Activated B cell treated with CpG ODN at 0.5 μM for 24 hours (primary cell): ENCODE measurements at regions of chr7 and their contacts with region 1.

Region 1: DNA sequence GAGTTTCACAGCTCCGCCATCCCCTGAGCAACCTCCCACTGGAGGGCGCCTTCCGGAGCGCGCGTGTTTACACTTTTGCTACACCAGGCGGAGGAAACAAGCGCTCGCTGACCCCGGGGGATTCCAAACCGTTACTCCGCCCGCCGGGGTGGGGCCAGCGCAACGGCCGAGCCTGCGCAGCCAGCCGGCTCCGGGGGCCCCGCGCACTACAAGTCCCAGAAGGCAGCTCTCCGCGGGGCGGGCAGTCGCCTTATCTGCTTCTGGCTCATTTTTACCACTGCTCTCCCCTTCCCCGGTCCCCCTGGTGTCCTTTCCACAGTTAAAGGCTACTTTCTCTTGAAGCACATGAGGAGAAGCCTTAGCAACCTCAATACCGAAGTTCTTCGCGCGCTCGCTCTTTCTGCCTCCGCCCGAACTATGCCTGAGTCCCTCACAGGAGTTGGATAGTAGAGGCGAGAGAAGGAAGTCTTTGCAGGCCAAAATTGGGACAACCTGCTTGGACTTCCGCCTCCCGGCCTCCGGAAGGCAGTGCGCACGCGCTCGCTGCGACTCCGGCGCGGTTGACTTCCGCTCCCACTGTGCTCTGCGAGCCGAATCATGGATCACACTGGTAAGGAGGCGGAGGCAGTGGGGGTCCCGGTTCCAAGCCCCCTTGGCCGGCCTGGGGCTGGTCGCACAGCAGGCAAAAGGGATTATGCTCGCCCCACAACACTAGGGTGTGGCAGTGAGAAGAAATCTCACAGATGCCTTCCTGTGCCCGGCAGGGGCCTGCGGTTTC is at the start of gene CBLL1:
- DNase-seq: peak; percentile 97
- ATAC-seq: peak; percentile 89
- H3K4me3 Mint-ChIP-seq: peak within 1 kb of the TSS; percentile 96
- H3K27ac Mint-ChIP-seq: peak within 1 kb of the TSS; percentile 99
- H3K4me1 Mint-ChIP-seq: peaks cover 53% of the 10 kb centered on the region
- H3K27me3 Mint-ChIP-seq: no peaks in the 10 kb centered on the region
- CTCF ChIP-seq: no peak
- total RNA-seq, gene CBLL1: 35.3 and 47.2 TPM in 2 replicates

Region 2: GRCh38 chr7:107462740-107463444 is 280.9 kb before region 1 on chr7:
- CTCF ChIA-PET with region 1: interaction called, 7 read pairs
- POLR2A ChIA-PET with region 1: no interaction called
- intact Hi-C with region 1: loop called (anchors 5 kb)
- DNase-seq: no peak
- ATAC-seq: peak; percentile 75
- H3K4me3 Mint-ChIP-seq: no peak overlapping the region
- H3K27ac Mint-ChIP-seq: no peak overlapping the region
- H3K4me1 Mint-ChIP-seq: no peaks in the 10 kb centered on the region
- H3K27me3 Mint-ChIP-seq: no peaks in the 10 kb centered on the region
- CTCF ChIP-seq: no peak

Region 3: DNA sequence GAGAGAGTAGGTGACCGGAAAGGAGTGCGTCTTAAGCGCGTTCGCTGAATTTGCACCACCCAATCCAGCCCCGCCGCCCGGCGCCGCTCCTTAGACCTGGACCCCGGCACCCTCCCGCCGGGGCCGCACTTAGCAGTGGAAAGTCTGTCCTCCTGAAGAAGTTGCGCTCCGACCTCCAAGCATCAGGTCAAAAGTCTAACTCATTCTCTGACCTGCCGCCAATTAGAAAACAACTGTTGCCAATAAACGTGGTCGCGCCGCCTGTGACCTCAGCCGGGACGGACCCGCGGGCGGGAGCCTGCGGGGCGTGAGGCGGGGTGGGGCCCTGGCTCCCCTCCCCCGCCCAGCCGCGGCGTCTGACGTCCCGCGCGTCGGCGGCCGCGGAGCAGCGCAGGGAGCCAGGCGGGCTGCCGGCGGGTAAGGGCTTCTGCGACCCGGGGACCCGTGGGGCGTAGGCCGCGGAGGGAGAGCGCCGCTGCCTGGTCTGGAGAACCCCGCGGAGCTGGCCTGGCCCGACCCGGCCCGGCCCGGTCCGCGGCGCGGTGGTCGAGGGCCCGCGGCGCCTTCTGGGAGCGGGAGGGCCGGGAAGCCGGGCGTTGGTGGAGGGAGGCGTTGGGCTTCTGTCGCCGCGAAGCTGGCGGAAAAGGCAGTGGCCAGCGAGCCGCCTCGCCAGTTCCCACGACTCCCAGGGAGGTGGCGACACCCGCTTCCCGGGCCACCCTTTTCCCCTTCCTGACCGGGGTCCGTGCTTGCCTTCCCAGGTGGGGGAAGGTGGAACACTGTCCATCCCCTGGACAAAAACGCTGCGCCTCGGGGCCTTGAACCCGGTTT is 163.7 kb before region 1 on chr7 and contains the start of gene BCAP29:
- CTCF ChIA-PET with region 1: interaction called, 3 read pairs
- POLR2A ChIA-PET with region 1: interaction called, 4 read pairs
- intact Hi-C with region 1: loop called (anchors 1 kb)
- DNase-seq: peak; percentile 81
- ATAC-seq: peak; percentile 98
- H3K4me3 Mint-ChIP-seq: peak within 1 kb of the TSS; percentile 95
- H3K27ac Mint-ChIP-seq: peak within 1 kb of the TSS; percentile 90
- H3K4me1 Mint-ChIP-seq: peaks cover 23% of the 10 kb centered on the region
- H3K27me3 Mint-ChIP-seq: no peaks in the 10 kb centered on the region
- CTCF ChIP-seq: no peak
- total RNA-seq, gene BCAP29: 23.9 and 24.9 TPM in 2 replicates

Region 4: DNA sequence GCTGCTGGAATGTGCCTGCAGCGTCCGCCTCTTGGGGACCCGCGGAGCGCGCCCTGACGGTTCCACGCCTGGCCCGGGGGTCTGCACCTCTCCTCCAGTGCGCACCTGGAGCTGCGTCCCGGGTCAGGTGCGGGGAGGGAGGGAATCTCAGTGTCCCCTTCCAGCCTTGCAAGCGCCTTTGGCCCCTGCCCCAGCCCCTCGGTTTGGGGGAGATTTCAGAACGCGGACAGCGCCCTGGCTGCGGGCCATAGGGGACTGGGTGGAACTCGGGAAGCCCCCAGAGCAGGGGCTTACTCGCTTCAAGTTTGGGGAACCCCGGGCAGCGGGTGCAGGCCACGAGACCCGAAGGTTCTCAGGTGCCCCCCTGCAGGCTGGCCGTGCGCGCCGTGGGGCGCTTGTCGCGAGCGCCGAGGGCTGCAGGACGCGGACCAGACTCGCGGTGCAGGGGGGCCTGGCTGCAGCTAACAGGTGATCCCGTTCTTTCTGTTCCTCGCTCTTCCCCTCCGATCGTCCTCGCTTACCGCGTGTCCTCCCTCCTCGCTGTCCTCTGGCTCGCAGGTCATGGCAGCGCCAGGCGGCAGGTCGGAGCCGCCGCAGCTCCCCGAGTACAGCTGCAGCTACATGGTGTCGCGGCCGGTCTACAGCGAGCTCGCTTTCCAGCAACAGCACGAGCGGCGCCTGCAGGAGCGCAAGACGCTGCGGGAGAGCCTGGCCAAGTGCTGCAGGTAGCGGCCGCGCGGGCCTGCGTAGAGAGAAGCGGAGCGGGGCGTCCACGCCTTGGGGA is 82.5 kb before region 1 on chr7:
- CTCF ChIA-PET with region 1: no interaction called
- POLR2A ChIA-PET with region 1: interaction called, 4 read pairs
- intact Hi-C with region 1: loop called (anchors 2 kb)
- DNase-seq: peak; percentile 42
- ATAC-seq: peak; percentile 49
- H3K4me3 Mint-ChIP-seq: peak overlapping the region; percentile 88
- H3K27ac Mint-ChIP-seq: no peak overlapping the region
- H3K4me1 Mint-ChIP-seq: peaks cover 23% of the 10 kb centered on the region
- H3K27me3 Mint-ChIP-seq: peaks cover 20% of the 10 kb centered on the region
- CTCF ChIP-seq: no peak

Region 5: GRCh38 chr7:107890962-107891635 is 147.3 kb after region 1 on chr7 and contains the start of gene DLD:
- CTCF ChIA-PET with region 1: no interaction called
- POLR2A ChIA-PET with region 1: interaction called, 20 read pairs
- intact Hi-C with region 1: loop called (anchors 1 kb)
- DNase-seq: peak; percentile 89
- ATAC-seq: peak; percentile 97
- H3K4me3 Mint-ChIP-seq: peak within 1 kb of the TSS; percentile 98
- H3K27ac Mint-ChIP-seq: peak within 1 kb of the TSS; percentile 96
- H3K4me1 Mint-ChIP-seq: peaks cover 45% of the 10 kb centered on the region
- H3K27me3 Mint-ChIP-seq: no peaks in the 10 kb centered on the region
- CTCF ChIP-seq: no peak
- total RNA-seq, gene DLD: 55.0 and 66.1 TPM in 2 replicates

Region 6: GRCh38 chr7:108308903-108309302 is 565.1 kb after region 1 on chr7:
- CTCF ChIA-PET with region 1: no interaction called
- POLR2A ChIA-PET with region 1: no interaction called
- intact Hi-C with region 1: no loop called
- DNase-seq: no peak
- ATAC-seq: peak; percentile 47
- H3K4me3 Mint-ChIP-seq: no peak overlapping the region
- H3K27ac Mint-ChIP-seq: peak overlapping the region; percentile 7
- H3K4me1 Mint-ChIP-seq: peaks cover 28% of the 10 kb centered on the region
- H3K27me3 Mint-ChIP-seq: no peaks in the 10 kb centered on the region
- CTCF ChIP-seq: no peak

Region 7: GRCh38 chr7:108525985-108526767 is 782.4 kb after region 1 on chr7 and contains the start of gene PNPLA8:
- CTCF ChIA-PET with region 1: no interaction called
- POLR2A ChIA-PET with region 1: interaction called, 6 read pairs
- intact Hi-C with region 1: loop called (anchors 1 kb)
- DNase-seq: peak; percentile 100
- ATAC-seq: peak; percentile 90
- H3K4me3 Mint-ChIP-seq: peak within 1 kb of the TSS; percentile 96
- H3K27ac Mint-ChIP-seq: peak within 1 kb of the TSS; percentile 97
- H3K4me1 Mint-ChIP-seq: peaks cover 53% of the 10 kb centered on the region
- H3K27me3 Mint-ChIP-seq: no peaks in the 10 kb centered on the region
- CTCF ChIP-seq: no peak
- total RNA-seq, gene PNPLA8: 20.9 and 25.5 TPM in 2 replicates